WTC11 (cell line): ENCODE measurements at regions of chr14 and their contacts with region 1.

Region 1: DNA sequence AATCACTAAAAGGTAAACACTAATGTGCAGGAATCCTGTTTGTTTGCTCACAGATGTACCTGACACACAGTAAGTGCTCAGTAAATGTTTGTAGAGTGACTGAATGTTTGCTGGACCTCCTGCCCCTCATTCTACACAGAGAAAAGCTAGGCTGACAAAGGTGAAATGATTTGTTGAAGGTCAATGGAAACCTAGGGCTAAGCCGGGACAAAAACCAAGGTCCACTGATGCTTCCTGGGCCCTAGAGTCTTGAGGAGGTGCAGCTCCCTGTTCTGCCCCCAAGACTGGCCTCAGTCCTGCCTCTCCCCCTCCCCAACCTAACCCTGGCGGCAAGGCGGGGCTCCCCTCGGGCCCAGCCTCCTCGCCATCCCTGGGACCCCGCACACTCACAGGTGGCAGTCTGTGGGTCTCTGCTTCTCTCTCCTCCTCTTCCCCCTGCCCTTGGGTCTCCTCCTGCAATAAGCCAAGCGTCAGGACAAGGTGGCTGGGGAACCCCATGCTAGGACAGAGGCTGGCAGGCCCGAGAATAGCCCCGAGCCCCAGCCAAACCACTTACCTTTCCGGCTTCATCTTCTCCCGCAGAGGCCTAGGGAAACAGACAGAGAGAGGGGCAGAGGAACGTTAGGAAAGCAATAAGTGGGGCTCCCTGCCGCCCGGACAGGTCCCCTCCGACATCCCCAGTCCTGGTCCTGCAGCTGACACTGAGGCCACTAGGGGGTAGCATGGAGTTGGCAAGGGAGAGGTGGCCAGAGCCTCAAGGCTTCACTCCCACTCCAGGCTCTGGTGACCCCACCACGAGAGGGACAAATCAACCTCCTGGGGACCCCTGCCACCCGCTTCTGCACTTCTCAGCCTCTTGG is 9.3 kb downstream of the PGF start:
- DNase-seq: peak; percentile 92
- ATAC-seq: peak; percentile 84
- H3K4me3 Mint-ChIP-seq: no peak overlapping the region
- H3K27ac Mint-ChIP-seq: 0 out of 2 replicates have a peak overlapping the region, but pooled peaks have one; percentile 34
- H3K4me1 Mint-ChIP-seq: peaks cover 3% of the 10 kb centered on the region
- H3K27me3 Mint-ChIP-seq: no peaks in the 10 kb centered on the region
- CTCF ChIP-seq: peak; percentile 84

Region 2: GRCh38 chr14:74546416-74546815 is 399.6 kb before region 1 on chr14:
- CTCF ChIA-PET with region 1: no interaction called
- POLR2A ChIA-PET with region 1: no interaction called
- DNase-seq: no peak
- ATAC-seq: no peak
- H3K4me3 Mint-ChIP-seq: no peak overlapping the region
- H3K27ac Mint-ChIP-seq: no peak overlapping the region
- H3K4me1 Mint-ChIP-seq: peaks cover 4% of the 10 kb centered on the region
- H3K27me3 Mint-ChIP-seq: no peaks in the 10 kb centered on the region
- CTCF ChIP-seq: no peak

Region 3: GRCh38 chr14:74922739-74923401 is 23.2 kb before region 1 on chr14 and contains the start of gene RPS6KL1:
- CTCF ChIA-PET with region 1: interaction called, 60 read pairs
- POLR2A ChIA-PET with region 1: no interaction called
- DNase-seq: peak; percentile 89
- ATAC-seq: peak; percentile 98
- H3K4me3 Mint-ChIP-seq: peak within 1 kb of the TSS; percentile 87
- H3K27ac Mint-ChIP-seq: no peak within 1 kb of the TSS
- H3K4me1 Mint-ChIP-seq: 0 out of 2 replicates have a peak, but pooled peaks cover 3% of the 10 kb centered on the region
- H3K27me3 Mint-ChIP-seq: peaks cover 3% of the 10 kb centered on the region; the same call in 1 of the 2 replicates
- CTCF ChIP-seq: no peak
- total RNA-seq, gene RPS6KL1: 10.6 to 12.6 TPM (median 12.2 TPM) in 3 replicates

Region 4: GRCh38 chr14:74963705-74964271 is 17.7 kb after region 1 on chr14:
- CTCF ChIA-PET with region 1: interaction called, 23 read pairs
- POLR2A ChIA-PET with region 1: no interaction called
- DNase-seq: no peak
- ATAC-seq: no peak; the same call in 1 of the 2 replicates
- H3K4me3 Mint-ChIP-seq: no peak overlapping the region
- H3K27ac Mint-ChIP-seq: no peak overlapping the region
- H3K4me1 Mint-ChIP-seq: peaks cover 9% of the 10 kb centered on the region
- H3K27me3 Mint-ChIP-seq: no peaks in the 10 kb centered on the region
- CTCF ChIP-seq: no peak

Region 5: GRCh38 chr14:74979442-74980361 is 33.6 kb after region 1 on chr14:
- CTCF ChIA-PET with region 1: interaction called, 53 read pairs
- POLR2A ChIA-PET with region 1: no interaction called
- DNase-seq: peak; percentile 54
- ATAC-seq: peak; percentile 67
- H3K4me3 Mint-ChIP-seq: no peak overlapping the region
- H3K27ac Mint-ChIP-seq: no peak overlapping the region
- H3K4me1 Mint-ChIP-seq: peaks cover 33% of the 10 kb centered on the region
- H3K27me3 Mint-ChIP-seq: no peaks in the 10 kb centered on the region; the same call in 1 of the 2 replicates
- CTCF ChIP-seq: no peak

Region 6: GRCh38 chr14:75022655-75023054 is 76.6 kb after region 1 on chr14:
- CTCF ChIA-PET with region 1: interaction called, 40 read pairs
- POLR2A ChIA-PET with region 1: no interaction called
- DNase-seq: peak; percentile 48
- ATAC-seq: peak; percentile 83
- H3K4me3 Mint-ChIP-seq: no peak overlapping the region
- H3K27ac Mint-ChIP-seq: no peak overlapping the region
- H3K4me1 Mint-ChIP-seq: no peaks in the 10 kb centered on the region
- H3K27me3 Mint-ChIP-seq: no peaks in the 10 kb centered on the region
- CTCF ChIP-seq: peak; percentile 17; the same call in 1 of the 2 replicates

Region 7: GRCh38 chr14:75069045-75069810 is 123.2 kb after region 1 on chr14 and contains the start of gene ZC2HC1C:
- CTCF ChIA-PET with region 1: interaction called, 29 read pairs
- POLR2A ChIA-PET with region 1: no interaction called
- DNase-seq: peak; percentile 97
- ATAC-seq: peak; percentile 87
- H3K4me3 Mint-ChIP-seq: no peak within 1 kb of the TSS
- H3K27ac Mint-ChIP-seq: peak within 1 kb of the TSS; percentile 98
- H3K4me1 Mint-ChIP-seq: peaks cover 11% of the 10 kb centered on the region
- H3K27me3 Mint-ChIP-seq: no peaks in the 10 kb centered on the region
- CTCF ChIP-seq: no peak
- total RNA-seq, gene ZC2HC1C: 1.3 to 1.8 TPM (median 1.6 TPM) in 3 replicates